Prostate gland (tissue), 2 donors: ENCODE measurements at regions of chr4 and their contacts with region 1.

Region 1: GRCh38 chr4:15479089-15479912 is 9.6 kb downstream of the CC2D2A start:
- DNase-seq: peak; percentile 39
- H3K4me3 ChIP-seq: peak overlapping the region; percentile 26 to 37
- H3K27ac ChIP-seq: peak overlapping the region; percentile 65 to 69
- H3K4me1 ChIP-seq: no peaks in the 10 kb centered on the region
- H3K27me3 ChIP-seq: no peaks in the 10 kb centered on the region
- CTCF ChIP-seq: peak in 3 of 4 experiments; percentile 55 to 75 (median 56)
- POLR2A ChIP-seq: no peak

Region 2: GRCh38 chr4:15649914-15650545 is 170.7 kb after region 1 on chr4:
- intact Hi-C with region 1: loop called (anchors 1 kb)
- DNase-seq: peak; percentile 20
- H3K4me3 ChIP-seq: no peak overlapping the region
- H3K27ac ChIP-seq: peak overlapping the region; percentile 18 to 47
- H3K4me1 ChIP-seq: peaks cover 4% of the 10 kb centered on the region
- H3K27me3 ChIP-seq: no peaks in the 10 kb centered on the region
- CTCF ChIP-seq: peak in 3 of 4 experiments; percentile 50 to 62 (median 53)
- POLR2A ChIP-seq: no peak

Region 3: DNA sequence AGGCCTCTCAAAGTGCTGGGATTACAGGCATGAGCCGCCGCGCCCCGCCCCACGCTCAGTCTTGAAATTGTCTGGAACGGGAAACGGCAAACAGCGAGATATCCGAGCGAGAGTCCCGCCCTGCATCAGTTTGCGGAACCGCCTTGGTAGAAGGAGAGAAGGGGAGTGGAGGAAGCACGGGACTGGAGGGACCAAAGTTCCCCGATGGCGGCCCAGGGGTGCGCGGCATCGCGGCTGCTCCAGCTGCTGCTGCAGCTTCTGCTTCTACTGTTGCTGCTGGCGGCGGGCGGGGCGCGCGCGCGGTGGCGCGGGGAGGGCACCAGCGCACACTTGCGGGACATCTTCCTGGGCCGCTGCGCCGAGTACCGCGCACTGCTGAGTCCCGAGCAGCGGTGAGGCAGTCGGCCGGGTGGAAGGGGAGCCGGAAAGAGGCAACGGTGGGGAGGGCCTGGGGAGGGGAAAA is 223.7 kb after region 1 on chr4 and contains the start of gene BST1:
- intact Hi-C with region 1: no loop called
- DNase-seq: peak; percentile 13
- H3K4me3 ChIP-seq: peak within 1 kb of the TSS; percentile 20 to 32
- H3K27ac ChIP-seq: no peak within 1 kb of the TSS
- H3K4me1 ChIP-seq: no peaks in the 10 kb centered on the region
- H3K27me3 ChIP-seq: no peaks in the 10 kb centered on the region
- CTCF ChIP-seq: no peak
- POLR2A ChIP-seq: no peak
- total RNA-seq, gene BST1: 1.1 to 2.3 TPM

Region 4: GRCh38 chr4:15719506-15719905 is 240.2 kb after region 1 on chr4:
- intact Hi-C with region 1: no loop called
- DNase-seq: no peak
- H3K4me3 ChIP-seq: no peak overlapping the region
- H3K27ac ChIP-seq: no peak overlapping the region
- H3K4me1 ChIP-seq: no peaks in the 10 kb centered on the region
- H3K27me3 ChIP-seq: no peaks in the 10 kb centered on the region
- CTCF ChIP-seq: no peak
- POLR2A ChIP-seq: no peak

Region 5: GRCh38 chr4:15729910-15730533 is 250.7 kb after region 1 on chr4:
- intact Hi-C with region 1: loop called (anchors 5 kb)
- DNase-seq: peak; percentile 27
- H3K4me3 ChIP-seq: no peak overlapping the region
- H3K27ac ChIP-seq: no peak overlapping the region
- H3K4me1 ChIP-seq: no peaks in the 10 kb centered on the region
- H3K27me3 ChIP-seq: no peaks in the 10 kb centered on the region
- CTCF ChIP-seq: peak; percentile 71 to 83 (median 78)
- POLR2A ChIP-seq: no peak